H1 (cell line): ENCODE measurements at regions of chr17 and their contacts with region 1.

Region 1: DNA sequence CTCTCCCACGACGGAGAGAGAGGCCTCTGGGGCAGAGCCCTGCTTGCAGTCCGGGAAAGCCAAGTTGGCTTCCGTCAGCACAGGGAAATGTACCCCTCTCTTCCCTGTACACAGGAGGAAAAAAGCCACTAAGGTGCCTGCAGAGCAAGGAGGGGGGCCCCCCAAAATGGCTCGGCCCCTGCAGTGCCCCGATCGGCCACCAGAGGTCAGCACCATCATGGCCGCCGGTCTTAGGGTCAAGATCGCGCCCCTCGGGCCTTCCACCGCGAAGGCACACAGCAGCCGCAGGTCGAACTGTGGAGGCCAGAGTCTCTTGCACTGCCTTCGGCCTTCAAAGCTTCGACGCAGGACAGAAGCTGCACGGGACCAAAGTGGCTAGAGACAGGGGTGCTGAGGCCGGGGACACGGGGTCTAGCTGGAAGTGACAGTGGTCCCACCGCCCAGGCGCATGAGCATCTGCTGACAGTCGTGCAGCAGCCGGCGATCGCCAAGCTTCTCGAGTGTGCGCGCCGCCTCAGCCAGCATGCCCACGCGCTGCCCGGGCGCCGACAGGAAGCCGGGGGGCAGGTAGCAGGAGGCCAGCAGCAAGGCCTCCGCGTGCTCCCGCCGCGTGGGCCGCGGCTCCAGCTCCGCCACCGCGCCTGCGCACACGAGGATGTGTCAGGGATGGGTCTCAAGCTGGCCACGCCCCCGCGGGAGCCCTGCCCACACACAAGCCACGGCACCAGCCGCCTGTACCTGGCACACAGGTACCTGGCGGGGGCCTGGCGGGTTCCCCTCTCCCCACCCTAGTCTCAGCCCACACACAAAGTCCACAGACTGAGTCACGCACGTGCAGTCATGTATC is 24.4 kb downstream of the SREBF1 start:
- DNase-seq: peak in 1 of 2 experiments; percentile 99
- H3K4me3 ChIP-seq: peak overlapping the region in 1 of 4 experiments; percentile 14; a peak in 1 of 8 replicates
- H3K27ac ChIP-seq: no peak overlapping the region
- H3K4me1 ChIP-seq: peaks cover 0 to 20% (median 12%) of the 10 kb centered on the region in 4 experiments; a peak in 6 of 7 replicates
- H3K27me3 ChIP-seq: peaks cover 6 to 23% (median 16%) of the 10 kb centered on the region in 4 experiments
- CTCF ChIP-seq: peak; percentile 93 to 97 (median 97)
- EP300 ChIP-seq: no peak
- POLR2A ChIP-seq: no peak
- RAD21 ChIP-seq: peak; percentile 86 to 92

Region 2: DNA sequence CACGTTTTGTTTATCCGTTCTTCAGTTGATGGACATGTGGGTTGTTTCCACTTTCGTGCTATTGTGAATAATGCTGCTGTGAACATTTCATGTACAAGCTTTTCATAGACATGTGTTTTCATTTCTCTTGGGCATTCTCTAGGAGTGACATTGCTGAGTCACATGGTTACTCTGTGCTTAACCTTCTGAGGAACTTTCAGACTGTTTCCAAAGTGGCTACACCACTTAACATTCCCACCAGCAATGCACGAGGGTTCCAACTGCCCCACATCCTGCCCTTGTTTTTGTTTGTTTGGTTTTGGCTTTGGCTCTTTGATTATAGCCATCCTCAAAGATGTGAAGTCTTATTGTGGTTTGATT is 206.7 kb before region 1 on chr17:
- CTCF ChIA-PET with region 1: no interaction called
- POLR2A ChIA-PET with region 1: no interaction called
- DNase-seq: no peak
- H3K4me3 ChIP-seq: no peak overlapping the region
- H3K27ac ChIP-seq: no peak overlapping the region
- H3K4me1 ChIP-seq: peaks cover 0 to 3% (median 0%) of the 10 kb centered on the region in 4 experiments; a peak in 1 of 7 replicates
- H3K27me3 ChIP-seq: no peaks in the 10 kb centered on the region
- CTCF ChIP-seq: no peak
- EP300 ChIP-seq: no peak
- POLR2A ChIP-seq: no peak
- RAD21 ChIP-seq: no peak

Region 3: GRCh38 chr17:17729620-17730249 is 82.7 kb before region 1 on chr17:
- CTCF ChIA-PET with region 1: interaction called, 16 read pairs
- POLR2A ChIA-PET with region 1: interaction called, 3 read pairs
- DNase-seq: peak in 1 of 2 experiments; percentile 83
- H3K4me3 ChIP-seq: no peak overlapping the region; a peak in 1 of 8 replicates
- H3K27ac ChIP-seq: no peak overlapping the region
- H3K4me1 ChIP-seq: peaks cover 0 to 14% (median 12%) of the 10 kb centered on the region in 4 experiments; a peak in 6 of 7 replicates
- H3K27me3 ChIP-seq: peaks cover 39 to 47% (median 46%) of the 10 kb centered on the region in 4 experiments
- CTCF ChIP-seq: peak; percentile 73 to 87 (median 77)
- EP300 ChIP-seq: no peak
- POLR2A ChIP-seq: no peak
- RAD21 ChIP-seq: peak; percentile 70 to 84

Region 4: GRCh38 chr17:17742133-17742621 is 70.3 kb before region 1 on chr17:
- CTCF ChIA-PET with region 1: no interaction called
- POLR2A ChIA-PET with region 1: no interaction called
- DNase-seq: no peak
- H3K4me3 ChIP-seq: no peak overlapping the region
- H3K27ac ChIP-seq: no peak overlapping the region
- H3K4me1 ChIP-seq: peaks cover 7 to 39% (median 29%) of the 10 kb centered on the region in 4 experiments
- H3K27me3 ChIP-seq: peaks cover 0 to 15% (median 6%) of the 10 kb centered on the region in 4 experiments; a peak in 5 of 7 replicates
- CTCF ChIP-seq: no peak
- EP300 ChIP-seq: no peak
- POLR2A ChIP-seq: no peak
- RAD21 ChIP-seq: no peak

Region 5: DNA sequence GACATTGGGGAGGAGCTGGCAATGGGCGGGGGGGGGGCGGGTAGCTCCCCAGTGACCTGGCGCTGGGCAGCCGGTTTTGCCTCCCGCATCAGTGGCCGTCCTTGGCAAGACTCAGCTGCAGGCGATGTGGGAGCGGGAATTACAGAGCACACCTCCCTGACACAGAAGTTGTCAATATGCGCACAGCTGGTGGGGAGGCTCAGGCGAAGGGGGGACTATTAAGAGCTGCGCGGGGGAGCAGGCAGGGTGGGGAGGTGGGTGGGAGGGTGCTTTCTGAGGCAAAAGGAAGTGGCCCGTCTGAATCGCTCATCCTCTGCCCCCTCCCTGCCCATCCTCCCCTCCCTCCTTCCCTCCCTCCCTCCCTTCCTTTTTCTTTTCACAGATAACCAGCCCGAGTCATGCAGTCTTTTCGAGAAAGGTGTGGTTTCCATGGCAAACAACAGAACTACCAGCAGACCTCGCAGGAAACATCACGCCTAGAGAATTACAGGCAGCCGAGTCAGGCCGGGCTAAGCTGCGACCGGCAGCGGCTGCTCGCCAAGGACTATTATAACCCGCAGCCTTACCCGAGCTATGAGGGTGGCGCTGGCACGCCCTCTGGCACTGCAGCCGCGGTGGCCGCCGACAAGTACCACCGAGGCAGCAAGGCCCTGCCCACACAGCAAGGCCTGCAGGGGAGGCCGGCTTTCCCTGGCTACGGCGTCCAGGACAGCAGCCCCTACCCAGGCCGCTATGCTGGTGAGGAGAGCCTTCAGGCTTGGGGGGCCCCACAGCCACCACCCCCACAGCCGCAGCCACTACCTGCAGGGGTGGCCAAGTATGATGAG is 19.7 kb before region 1 on chr17:
- CTCF ChIA-PET with region 1: interaction called, 48 read pairs
- POLR2A ChIA-PET with region 1: interaction called, 20 read pairs
- DNase-seq: no peak
- H3K4me3 ChIP-seq: peak overlapping the region in 2 of 4 experiments; percentile 14 to 37; a peak in 1 of 8 replicates
- H3K27ac ChIP-seq: no peak overlapping the region
- H3K4me1 ChIP-seq: peaks cover 5 to 31% (median 22%) of the 10 kb centered on the region in 4 experiments
- H3K27me3 ChIP-seq: peaks cover 0 to 28% (median 20%) of the 10 kb centered on the region in 4 experiments; a peak in 6 of 7 replicates
- CTCF ChIP-seq: no peak
- EP300 ChIP-seq: no peak
- POLR2A ChIP-seq: no peak
- RAD21 ChIP-seq: no peak

Region 6: GRCh38 chr17:17836250-17836817 is 23.9 kb after region 1 on chr17:
- CTCF ChIA-PET with region 1: interaction called, 30 read pairs
- POLR2A ChIA-PET with region 1: interaction called, 532 read pairs
- DNase-seq: peak; percentile 89 to 99
- H3K4me3 ChIP-seq: peak overlapping the region; percentile 81 to 99 (median 96)
- H3K27ac ChIP-seq: peak overlapping the region; percentile 93
- H3K4me1 ChIP-seq: peaks cover 19 to 48% (median 39%) of the 10 kb centered on the region in 4 experiments
- H3K27me3 ChIP-seq: no peaks in the 10 kb centered on the region
- CTCF ChIP-seq: no peak
- EP300 ChIP-seq: peak in 1 of 2 experiments; percentile 5; a peak in 1 of 3 replicates
- POLR2A ChIP-seq: peak; percentile 81 to 99
- RAD21 ChIP-seq: peak in 1 of 2 experiments; percentile 2; a peak in 1 of 4 replicates

Region 7: GRCh38 chr17:17868641-17869522 is 56.4 kb after region 1 on chr17:
- CTCF ChIA-PET with region 1: interaction called, 375 read pairs
- POLR2A ChIA-PET with region 1: interaction called, 3 read pairs
- DNase-seq: no peak
- H3K4me3 ChIP-seq: 0 out of 8 replicates have a peak overlapping the region, but pooled peaks of 1 of the 4 experiments have one; percentile 4
- H3K27ac ChIP-seq: no peak overlapping the region
- H3K4me1 ChIP-seq: peaks cover 3 to 14% (median 11%) of the 10 kb centered on the region in 4 experiments
- H3K27me3 ChIP-seq: peaks cover 0 to 6% (median 3%) of the 10 kb centered on the region in 4 experiments; a peak in 4 of 7 replicates
- CTCF ChIP-seq: no peak
- EP300 ChIP-seq: no peak
- POLR2A ChIP-seq: no peak
- RAD21 ChIP-seq: no peak

Region 8: GRCh38 chr17:17947966-17948365 is 135.5 kb after region 1 on chr17:
- CTCF ChIA-PET with region 1: no interaction called
- POLR2A ChIA-PET with region 1: no interaction called
- DNase-seq: no peak
- H3K4me3 ChIP-seq: no peak overlapping the region
- H3K27ac ChIP-seq: no peak overlapping the region
- H3K4me1 ChIP-seq: peaks cover 10 to 12% (median 11%) of the 10 kb centered on the region in 4 experiments
- H3K27me3 ChIP-seq: no peaks in the 10 kb centered on the region
- CTCF ChIP-seq: no peak
- EP300 ChIP-seq: no peak
- POLR2A ChIP-seq: no peak
- RAD21 ChIP-seq: no peak

Region 9: DNA sequence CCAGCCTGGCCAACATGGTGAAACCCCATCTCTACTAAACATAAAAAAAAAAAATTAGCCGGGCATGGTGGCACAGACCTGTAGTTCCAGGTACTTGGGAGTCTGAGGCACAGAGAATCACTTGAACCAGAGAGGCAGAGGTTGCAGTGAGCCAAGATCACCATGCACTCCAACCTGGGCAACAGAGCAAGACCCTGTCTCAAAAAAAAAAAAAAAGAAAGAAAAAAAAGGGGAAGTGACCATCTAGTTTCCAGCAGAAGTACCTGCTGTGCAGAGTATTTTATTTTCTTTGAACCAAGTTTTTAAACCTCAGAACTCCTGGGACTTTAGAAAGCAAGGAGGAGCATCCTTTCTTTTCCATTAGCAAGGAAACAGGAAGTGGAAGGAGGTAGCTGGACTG is 233.3 kb after region 1 on chr17:
- CTCF ChIA-PET with region 1: no interaction called
- POLR2A ChIA-PET with region 1: no interaction called
- DNase-seq: no peak
- H3K4me3 ChIP-seq: no peak overlapping the region
- H3K27ac ChIP-seq: no peak overlapping the region
- H3K4me1 ChIP-seq: peaks cover 0 to 3% (median 0%) of the 10 kb centered on the region in 4 experiments; a peak in 3 of 7 replicates
- H3K27me3 ChIP-seq: no peaks in the 10 kb centered on the region
- CTCF ChIP-seq: no peak
- EP300 ChIP-seq: no peak
- POLR2A ChIP-seq: no peak
- RAD21 ChIP-seq: no peak